ENCODE measurements at regions of chr10 and their contacts with region 1.

Region 1: DNA sequence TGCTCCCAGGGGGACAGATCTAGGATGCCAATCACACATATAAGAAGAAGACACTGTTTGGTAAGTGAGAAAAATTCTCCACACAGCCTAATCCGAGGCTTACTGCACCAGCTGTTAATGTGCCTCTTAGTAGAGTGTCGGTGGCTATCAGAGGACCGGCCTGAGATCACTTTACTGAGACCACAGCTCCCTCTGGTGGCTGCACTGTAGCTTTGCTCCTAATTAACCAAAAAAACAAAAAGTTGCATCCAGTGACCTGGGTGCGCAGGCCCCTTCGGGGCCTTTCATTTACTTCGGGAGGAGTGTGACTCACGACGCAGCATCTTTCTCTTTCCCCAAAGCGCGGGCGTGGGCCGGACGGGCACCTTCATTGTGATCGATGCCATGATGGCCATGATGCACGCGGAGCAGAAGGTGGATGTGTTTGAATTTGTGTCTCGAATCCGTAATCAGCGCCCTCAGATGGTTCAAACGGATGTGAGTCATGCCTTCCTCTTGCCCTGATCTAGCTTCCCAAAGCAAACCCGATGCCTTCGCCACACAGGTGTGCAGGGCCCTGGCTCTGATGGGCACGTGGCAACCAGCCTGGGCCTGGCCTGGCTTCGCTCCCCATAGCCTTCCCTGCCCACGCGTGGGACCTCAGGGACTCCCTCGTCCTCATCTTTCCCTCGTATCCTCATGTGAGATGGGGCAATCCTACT is 56.7 kb downstream of the MKI67 start:
- DNase-seq: peak; percentile 53 to 90 (median 74)
- ATAC-seq: peak; percentile 46 to 49 (median 48)
- H3K4me3 ChIP-seq: no peak overlapping the region
- H3K4me3 Mint-ChIP-seq: no peak overlapping the region
- H3K27ac ChIP-seq: no peak overlapping the region
- H3K27ac Mint-ChIP-seq: no peak overlapping the region
- H3K4me1 ChIP-seq: peaks cover 15 to 48% of the 10 kb centered on the region in 2 experiments
- H3K4me1 Mint-ChIP-seq: peaks cover 32 to 51% (median 37%) of the 10 kb centered on the region in 3 donors
- H3K27me3 ChIP-seq: no peaks in the 10 kb centered on the region
- H3K27me3 Mint-ChIP-seq: no peaks in the 10 kb centered on the region

Region 2: DNA sequence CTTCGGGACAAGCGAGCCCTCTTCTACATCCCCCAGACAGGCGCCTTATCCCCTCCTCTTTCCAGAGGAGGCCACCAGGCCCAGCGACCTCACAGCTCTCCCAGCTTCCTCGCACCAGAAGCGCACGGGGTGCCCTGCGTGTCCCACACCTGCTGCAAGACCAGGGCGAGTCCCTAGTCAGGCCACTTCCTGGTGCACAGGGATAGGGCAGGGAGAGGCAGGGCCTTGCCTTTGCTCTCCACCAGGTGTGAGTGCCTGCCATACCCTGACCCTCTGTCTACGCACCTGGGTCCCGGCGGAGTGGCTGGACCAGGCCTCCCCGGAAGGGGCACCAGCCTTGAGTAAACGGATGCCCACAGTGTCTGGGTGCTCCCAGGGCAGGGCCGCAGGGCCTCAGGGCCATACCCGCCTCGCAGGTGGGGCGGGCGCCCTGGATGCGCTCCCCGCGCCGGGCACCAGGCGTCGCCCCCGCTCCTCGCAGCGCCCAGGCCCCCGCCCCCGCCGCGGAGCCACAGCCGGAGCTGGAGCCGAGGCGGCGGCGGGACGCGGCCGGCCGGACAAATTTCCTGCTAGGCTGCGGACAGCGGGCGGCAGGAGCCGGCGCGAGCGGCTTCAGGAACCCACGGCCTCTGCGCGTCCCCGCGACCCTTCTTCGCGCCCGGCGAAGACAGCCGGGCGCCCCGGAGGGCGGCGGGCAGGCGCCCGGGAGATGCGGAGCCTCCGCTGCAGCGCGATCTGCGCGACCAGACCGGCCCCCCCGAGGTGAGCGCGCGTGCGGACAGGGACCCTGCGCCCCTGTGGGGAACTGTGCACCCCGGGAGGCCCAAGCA is 162.7 kb before region 1 on chr10 and contains the start of gene PTPRE:
- CTCF ChIA-PET with region 1: interaction called, 14 to 15 read pairs
- POLR2A ChIA-PET with region 1: no interaction called
- DNase-seq: peak in 34 of 35 experiments; percentile 18 to 74 (median 48)
- ATAC-seq: peak; percentile 92 to 99 (median 96)
- H3K4me3 ChIP-seq: peak within 1 kb of the TSS in 1 of 2 donors; percentile 57
- H3K4me3 Mint-ChIP-seq: peak within 1 kb of the TSS; percentile 34 to 50 (median 49)
- H3K27ac ChIP-seq: no peak within 1 kb of the TSS
- H3K27ac Mint-ChIP-seq: no peak within 1 kb of the TSS
- H3K4me1 ChIP-seq: peaks cover 0 to 9% of the 10 kb centered on the region in 2 experiments
- H3K4me1 Mint-ChIP-seq: no peaks in the 10 kb centered on the region
- H3K27me3 ChIP-seq: peaks cover 0 to 42% of the 10 kb centered on the region in 2 experiments
- H3K27me3 Mint-ChIP-seq: peaks cover 20 to 42% of the 10 kb centered on the region in 2 donors
- total RNA-seq, gene PTPRE: 23.2 to 69.2 (median 32.2) TPM

Region 3: DNA sequence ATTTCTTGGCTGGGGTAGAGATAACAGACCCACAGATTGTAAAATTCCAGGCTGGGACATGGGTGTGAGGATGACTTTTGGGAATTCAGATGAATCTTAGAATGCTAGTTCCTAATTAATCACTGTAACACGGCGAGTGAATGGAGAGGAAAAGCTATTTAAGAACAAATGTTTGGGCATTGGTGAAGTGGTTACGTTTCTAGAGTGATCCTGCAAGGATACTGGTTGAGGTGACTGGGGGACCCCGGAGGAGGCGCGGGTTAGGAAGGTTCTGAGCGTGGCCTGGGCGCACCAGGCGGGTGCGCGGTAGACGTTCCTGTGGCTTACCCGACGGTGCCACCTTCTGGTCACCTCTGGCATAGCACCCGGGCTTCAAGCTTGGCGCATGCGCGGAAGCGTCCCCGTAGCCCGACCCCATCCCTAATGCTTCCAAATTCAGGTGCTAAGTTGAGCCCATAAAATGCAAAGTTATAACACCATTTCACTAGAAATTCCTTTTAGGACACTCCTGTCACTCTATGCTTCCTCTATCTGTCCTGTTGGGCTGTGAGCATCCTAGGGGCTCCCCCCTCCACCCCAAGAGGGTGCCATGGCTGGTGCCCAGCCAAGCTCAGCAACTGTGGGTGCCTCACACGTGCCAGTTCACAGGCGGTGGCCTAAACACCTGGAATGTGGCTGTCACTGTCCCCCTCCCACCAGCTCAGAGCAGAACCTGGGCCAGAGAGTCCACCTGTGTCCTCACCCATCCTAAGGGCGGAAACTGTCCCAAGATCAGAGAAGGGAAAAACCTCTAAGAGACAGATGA is 58.1 kb before region 1 on chr10:
- CTCF ChIA-PET with region 1: interaction called, 6 to 14 read pairs
- POLR2A ChIA-PET with region 1: interaction called in 1 of 2 experiments, 3 read pairs
- DNase-seq: peak; percentile 66 to 91 (median 83)
- ATAC-seq: peak; percentile 91 to 97 (median 92)
- H3K4me3 ChIP-seq: no peak overlapping the region
- H3K4me3 Mint-ChIP-seq: peak overlapping the region in 1 of 3 donors; percentile 34
- H3K27ac ChIP-seq: no peak overlapping the region
- H3K27ac Mint-ChIP-seq: peak overlapping the region in 1 of 2 donors; percentile 16
- H3K4me1 ChIP-seq: peaks cover 2 to 8% of the 10 kb centered on the region in 2 experiments
- H3K4me1 Mint-ChIP-seq: peaks cover 5 to 8% (median 8%) of the 10 kb centered on the region in 3 donors
- H3K27me3 ChIP-seq: peaks cover 0 to 26% of the 10 kb centered on the region in 2 experiments
- H3K27me3 Mint-ChIP-seq: peaks cover 10 to 11% of the 10 kb centered on the region in 2 donors

Region 4: DNA sequence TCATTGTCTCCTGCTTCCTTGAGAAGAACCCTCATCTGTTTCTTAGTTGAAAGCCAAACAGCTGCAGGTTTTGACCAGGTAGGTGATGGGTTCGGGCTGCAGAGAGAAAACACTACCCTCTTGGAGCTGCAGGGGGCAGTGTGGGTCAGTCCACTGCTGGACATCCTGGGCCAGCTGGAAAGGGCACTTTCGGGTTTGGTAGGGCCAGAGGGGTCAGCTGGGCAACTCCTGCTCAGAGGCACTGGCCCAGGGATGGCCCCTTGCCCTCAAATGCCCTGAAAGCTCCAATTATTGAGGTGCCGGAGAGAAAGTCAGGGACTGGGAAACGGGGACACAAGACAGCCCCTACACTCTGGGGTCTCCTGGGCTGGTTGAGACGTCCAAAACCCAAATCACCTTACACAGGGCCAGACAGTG is 33.9 kb before region 1 on chr10:
- CTCF ChIA-PET with region 1: interaction called, 51 to 89 read pairs
- POLR2A ChIA-PET with region 1: interaction called in 1 of 2 experiments, 10 read pairs
- DNase-seq: peak in 30 of 35 experiments; percentile 17 to 78 (median 52)
- ATAC-seq: peak; percentile 65 to 77 (median 72)
- H3K4me3 ChIP-seq: no peak overlapping the region
- H3K4me3 Mint-ChIP-seq: no peak overlapping the region
- H3K27ac ChIP-seq: no peak overlapping the region
- H3K27ac Mint-ChIP-seq: no peak overlapping the region
- H3K4me1 ChIP-seq: peaks cover 0 to 4% of the 10 kb centered on the region in 2 experiments
- H3K4me1 Mint-ChIP-seq: peaks cover 0 to 5% (median 2%) of the 10 kb centered on the region in 3 donors
- H3K27me3 ChIP-seq: no peaks in the 10 kb centered on the region
- H3K27me3 Mint-ChIP-seq: no peaks in the 10 kb centered on the region

Region 5: DNA sequence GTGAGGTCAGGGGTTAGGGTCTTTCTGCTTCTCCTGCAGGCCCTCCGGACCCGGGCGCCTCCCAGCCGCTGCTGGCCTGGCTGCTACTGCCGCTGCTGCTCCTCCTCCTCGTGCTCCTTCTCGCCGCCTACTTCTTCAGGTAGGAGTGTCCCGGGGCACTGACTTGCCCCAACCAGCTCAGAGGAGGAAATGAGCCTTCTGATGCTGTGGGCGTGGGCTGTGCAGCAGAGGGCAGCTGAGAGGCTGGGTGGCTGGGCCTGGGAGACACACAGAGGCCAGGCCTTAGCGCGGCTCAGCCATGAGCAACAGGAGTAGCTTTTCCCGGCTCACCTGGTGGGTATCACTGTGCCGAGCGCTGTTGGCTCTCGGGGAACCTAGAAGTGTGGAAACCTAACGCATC is 22.1 kb before region 1 on chr10:
- CTCF ChIA-PET with region 1: interaction called, 12 to 22 read pairs
- POLR2A ChIA-PET with region 1: interaction called, 17 to 62 read pairs
- DNase-seq: peak; percentile 52 to 90 (median 81)
- ATAC-seq: peak; percentile 97 to 98 (median 98)
- H3K4me3 ChIP-seq: peak overlapping the region; percentile 57 to 64
- H3K4me3 Mint-ChIP-seq: peak overlapping the region; percentile 84 to 95 (median 93)
- H3K27ac ChIP-seq: peak overlapping the region; percentile 93
- H3K27ac Mint-ChIP-seq: peak overlapping the region; percentile 92 to 97
- H3K4me1 ChIP-seq: peaks cover 16 to 67% of the 10 kb centered on the region in 2 experiments
- H3K4me1 Mint-ChIP-seq: peaks cover 59 to 73% (median 63%) of the 10 kb centered on the region in 3 donors
- H3K27me3 ChIP-seq: no peaks in the 10 kb centered on the region
- H3K27me3 Mint-ChIP-seq: no peaks in the 10 kb centered on the region

Region 6: GRCh38 chr10:128130051-128130450 is 60.5 kb after region 1 on chr10:
- CTCF ChIA-PET with region 1: no interaction called
- POLR2A ChIA-PET with region 1: no interaction called
- DNase-seq: no peak
- ATAC-seq: no peak
- H3K4me3 ChIP-seq: no peak overlapping the region
- H3K4me3 Mint-ChIP-seq: no peak overlapping the region
- H3K27ac ChIP-seq: no peak overlapping the region
- H3K27ac Mint-ChIP-seq: no peak overlapping the region
- H3K4me1 ChIP-seq: peaks cover 2 to 17% of the 10 kb centered on the region in 2 experiments
- H3K4me1 Mint-ChIP-seq: peaks cover 11 to 18% (median 13%) of the 10 kb centered on the region in 3 donors
- H3K27me3 ChIP-seq: peaks cover 0 to 7% of the 10 kb centered on the region in 2 experiments
- H3K27me3 Mint-ChIP-seq: peaks cover 0 to 6% of the 10 kb centered on the region in 2 donors

Region 7: DNA sequence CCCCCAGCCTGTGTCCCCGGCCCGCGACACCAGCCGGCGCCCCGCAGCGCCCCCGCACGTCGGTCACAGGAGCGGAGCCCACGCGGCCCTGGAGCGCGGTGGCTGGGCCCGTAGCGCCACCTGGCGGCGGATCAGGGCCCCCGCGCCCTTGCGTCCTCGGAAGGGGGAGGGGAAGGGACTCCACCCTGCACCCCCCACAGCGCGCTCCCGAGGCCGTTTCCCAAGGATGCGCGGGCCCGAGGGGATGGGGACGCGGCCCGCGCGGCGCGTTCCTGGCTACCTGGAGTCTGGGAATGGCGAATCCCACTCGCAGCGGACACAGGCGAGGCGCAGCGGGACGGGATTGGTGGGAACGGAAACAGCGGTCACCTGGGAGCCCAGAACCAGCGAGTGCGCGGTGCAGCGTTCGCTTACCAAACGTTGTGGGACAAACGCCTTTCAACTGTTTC is 80.6 kb after region 1 on chr10:
- CTCF ChIA-PET with region 1: interaction called in 1 of 2 experiments, 6 read pairs
- POLR2A ChIA-PET with region 1: interaction called in 1 of 2 experiments, 10 read pairs
- DNase-seq: peak; percentile 58 to 93 (median 73)
- ATAC-seq: peak; percentile 96 to 98 (median 98)
- H3K4me3 ChIP-seq: peak overlapping the region; percentile 60 to 72
- H3K4me3 Mint-ChIP-seq: peak overlapping the region; percentile 61 to 68 (median 62)
- H3K27ac ChIP-seq: no peak overlapping the region
- H3K27ac Mint-ChIP-seq: no peak overlapping the region
- H3K4me1 ChIP-seq: peaks cover 2 to 13% of the 10 kb centered on the region in 2 experiments
- H3K4me1 Mint-ChIP-seq: peaks cover 0 to 12% (median 3%) of the 10 kb centered on the region in 3 donors
- H3K27me3 ChIP-seq: peaks cover 0 to 5% of the 10 kb centered on the region in 2 experiments
- H3K27me3 Mint-ChIP-seq: no peaks in the 10 kb centered on the region

Region 8: DNA sequence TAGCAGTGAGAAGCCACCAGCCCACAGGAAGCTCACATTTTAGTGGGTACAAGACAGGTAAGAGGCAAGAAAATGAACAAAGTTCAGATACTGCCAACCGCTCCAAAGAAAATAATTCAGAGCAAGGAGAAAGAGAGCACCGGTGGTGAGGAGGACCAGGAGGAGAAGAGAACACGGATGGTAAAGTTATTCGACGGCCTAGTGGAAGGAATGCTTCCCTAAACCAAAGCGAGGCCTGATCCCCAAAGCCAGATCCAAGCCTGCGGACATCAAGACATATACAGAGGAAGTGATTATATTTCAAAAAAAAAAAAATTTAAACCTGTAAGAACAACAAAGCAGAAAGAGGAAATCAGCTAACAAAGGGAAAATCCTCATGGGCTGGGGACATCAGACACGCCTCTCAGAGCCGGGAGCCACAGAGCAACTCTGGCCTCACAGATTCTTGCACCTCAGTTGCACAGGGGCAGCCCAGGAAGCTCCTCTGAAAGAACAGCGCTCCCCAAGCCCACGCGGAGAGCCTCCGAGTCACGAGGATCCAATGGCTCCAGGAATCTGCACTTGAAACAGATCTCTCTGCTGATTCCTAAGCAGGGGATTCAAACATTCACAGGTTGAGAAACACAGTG is 1184.2 kb after region 1 on chr10:
- CTCF ChIA-PET with region 1: no interaction called
- POLR2A ChIA-PET with region 1: no interaction called
- DNase-seq: no peak
- ATAC-seq: no peak
- H3K4me3 ChIP-seq: no peak overlapping the region
- H3K4me3 Mint-ChIP-seq: no peak overlapping the region
- H3K27ac ChIP-seq: no peak overlapping the region
- H3K27ac Mint-ChIP-seq: no peak overlapping the region
- H3K4me1 ChIP-seq: no peaks in the 10 kb centered on the region
- H3K4me1 Mint-ChIP-seq: no peaks in the 10 kb centered on the region
- H3K27me3 ChIP-seq: peaks cover 0 to 10% of the 10 kb centered on the region in 2 experiments
- H3K27me3 Mint-ChIP-seq: peaks cover 6 to 7% of the 10 kb centered on the region in 2 donors